Activated naive CD4-positive, alpha-beta T cell treated with anti-CD3 and anti-CD28 coated beads for 36 hours (primary cell): ENCODE measurements at regions of chr2 and their contacts with region 1.

Region 1: DNA sequence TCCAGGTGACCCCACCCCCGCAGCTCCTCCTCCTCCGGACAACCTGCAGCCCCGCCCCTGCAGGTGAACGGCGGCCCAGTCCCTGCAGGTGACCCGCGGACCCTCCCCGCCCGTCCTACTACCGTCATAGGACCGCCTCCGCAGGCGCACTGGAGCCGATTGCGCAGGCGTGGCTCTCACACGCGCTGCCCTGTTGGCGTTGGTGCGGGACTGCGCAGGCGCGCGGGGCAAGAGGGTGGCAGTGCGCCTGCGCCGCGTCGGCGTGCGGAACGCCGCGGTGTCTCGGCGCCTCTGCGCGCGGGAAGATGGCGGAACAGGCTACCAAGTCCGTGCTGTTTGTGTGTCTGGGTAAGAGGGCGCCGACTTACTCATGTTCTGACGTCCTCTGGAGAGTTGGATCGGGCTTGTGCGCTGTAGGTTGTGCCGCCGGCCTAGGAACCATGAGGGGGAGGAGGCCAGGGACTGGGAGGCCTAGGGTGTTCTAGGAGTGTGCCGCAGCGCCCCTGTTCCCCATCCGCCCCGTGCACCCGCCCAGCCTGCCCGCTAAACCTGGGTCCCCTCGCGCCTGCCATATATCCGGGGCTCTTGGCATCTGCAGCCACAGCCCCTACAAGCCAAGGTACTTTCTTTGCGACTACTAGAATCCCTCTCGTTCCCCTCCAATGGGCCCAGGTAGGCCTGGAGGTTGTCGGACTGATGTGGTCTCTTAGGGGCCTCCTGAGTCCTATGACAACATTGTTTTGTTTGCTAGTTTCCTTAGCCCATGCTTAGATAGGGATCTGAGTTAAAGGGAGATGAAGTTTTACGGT is at the start of gene ACP1:
- DNase-seq: peak; percentile 94
- H3K4me3 Mint-ChIP-seq: peak within 1 kb of the TSS; percentile 91
- H3K27ac Mint-ChIP-seq: peak within 1 kb of the TSS; percentile 90
- H3K4me1 Mint-ChIP-seq: peaks cover 40% of the 10 kb centered on the region
- H3K27me3 Mint-ChIP-seq: no peaks in the 10 kb centered on the region
- total RNA-seq, gene ACP1: 144 to 147 TPM

Region 2: GRCh38 chr2:213932-214693 is 50.8 kb before region 1 on chr2:
- CTCF ChIA-PET with region 1: no interaction called
- intact Hi-C with region 1: no loop called
- DNase-seq: no peak
- H3K4me3 Mint-ChIP-seq: no peak overlapping the region
- H3K27ac Mint-ChIP-seq: no peak overlapping the region
- H3K4me1 Mint-ChIP-seq: no peaks in the 10 kb centered on the region
- H3K27me3 Mint-ChIP-seq: no peaks in the 10 kb centered on the region

Region 3: GRCh38 chr2:246489-247144 is 18.2 kb before region 1 on chr2:
- CTCF ChIA-PET with region 1: interaction called, 3 read pairs
- intact Hi-C with region 1: loop called (anchors 2 kb)
- DNase-seq: peak; percentile 51
- H3K4me3 Mint-ChIP-seq: no peak overlapping the region
- H3K27ac Mint-ChIP-seq: no peak overlapping the region
- H3K4me1 Mint-ChIP-seq: peaks cover 5% of the 10 kb centered on the region
- H3K27me3 Mint-ChIP-seq: no peaks in the 10 kb centered on the region

Region 4: GRCh38 chr2:290090-290722 is 25.3 kb after region 1 on chr2:
- CTCF ChIA-PET with region 1: no interaction called
- intact Hi-C with region 1: loop called (anchors 1 kb)
- DNase-seq: peak; percentile 73
- H3K4me3 Mint-ChIP-seq: peak overlapping the region; percentile 66
- H3K27ac Mint-ChIP-seq: no peak overlapping the region
- H3K4me1 Mint-ChIP-seq: peaks cover 2% of the 10 kb centered on the region
- H3K27me3 Mint-ChIP-seq: peaks cover 28% of the 10 kb centered on the region

Region 5: GRCh38 chr2:393711-394696 is 129.1 kb after region 1 on chr2:
- CTCF ChIA-PET with region 1: no interaction called
- intact Hi-C with region 1: loop called (anchors 1 kb)
- DNase-seq: peak; percentile 85
- H3K4me3 Mint-ChIP-seq: peak overlapping the region; percentile 76
- H3K27ac Mint-ChIP-seq: peak overlapping the region; percentile 68
- H3K4me1 Mint-ChIP-seq: peaks cover 17% of the 10 kb centered on the region
- H3K27me3 Mint-ChIP-seq: peaks cover 9% of the 10 kb centered on the region

Region 6: DNA sequence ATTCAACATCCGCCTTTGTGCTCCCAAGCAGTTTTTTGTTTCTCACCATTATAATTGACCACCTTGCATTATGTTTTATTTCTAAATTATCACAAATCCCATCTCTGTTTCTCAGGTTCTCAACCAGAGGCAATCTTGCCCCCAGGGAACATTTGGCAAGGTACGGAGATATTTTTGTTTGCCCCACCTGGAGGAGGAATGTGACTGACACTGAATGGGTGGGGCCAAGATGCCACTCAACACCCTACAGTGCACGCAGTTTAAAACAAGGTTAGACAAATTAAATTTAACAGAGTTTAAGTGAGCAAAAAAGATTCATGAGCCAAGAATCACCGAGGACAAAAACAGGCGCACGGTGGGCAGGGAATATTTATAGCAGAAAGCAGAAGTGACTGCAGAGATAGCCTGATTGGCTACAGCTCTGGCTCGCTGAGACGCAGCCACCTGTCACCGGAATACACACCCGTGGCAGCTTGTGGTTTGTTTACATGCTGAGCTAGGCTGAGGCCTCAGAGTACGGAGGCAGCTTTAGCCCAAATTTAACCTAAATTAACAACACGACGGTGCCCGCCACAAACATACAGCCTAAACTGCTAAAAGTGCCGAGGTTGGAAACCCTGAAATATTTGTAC is 173.0 kb after region 1 on chr2:
- CTCF ChIA-PET with region 1: no interaction called
- intact Hi-C with region 1: loop called (anchors 5 kb)
- DNase-seq: peak; percentile 64
- H3K4me3 Mint-ChIP-seq: peak overlapping the region; percentile 65
- H3K27ac Mint-ChIP-seq: no peak overlapping the region
- H3K4me1 Mint-ChIP-seq: peaks cover 9% of the 10 kb centered on the region
- H3K27me3 Mint-ChIP-seq: no peaks in the 10 kb centered on the region